Activated naive CD4-positive, alpha-beta T cell treated with anti-CD3 and anti-CD28 coated beads for 36 hours (primary cell): ENCODE measurements at regions of chr1 and their contacts with region 1.

Region 1: GRCh38 chr1:85276215-85276977 is at the start of gene BCL10:
- DNase-seq: peak; percentile 97
- H3K4me3 Mint-ChIP-seq: peak within 1 kb of the TSS; percentile 80
- H3K27ac Mint-ChIP-seq: peak within 1 kb of the TSS; percentile 87
- H3K4me1 Mint-ChIP-seq: peaks cover 46% of the 10 kb centered on the region
- H3K27me3 Mint-ChIP-seq: no peaks in the 10 kb centered on the region
- total RNA-seq, gene BCL10: 13.8 to 17.7 TPM

Region 2: GRCh38 chr1:84156210-84156621 is 1120.2 kb before region 1 on chr1:
- CTCF ChIA-PET with region 1: no interaction called
- intact Hi-C with region 1: loop called (anchors 5 kb)
- DNase-seq: peak; percentile 19
- H3K4me3 Mint-ChIP-seq: peak overlapping the region; percentile 18
- H3K27ac Mint-ChIP-seq: peak overlapping the region; percentile 64
- H3K4me1 Mint-ChIP-seq: peaks cover 83% of the 10 kb centered on the region
- H3K27me3 Mint-ChIP-seq: no peaks in the 10 kb centered on the region

Region 3: GRCh38 chr1:84573967-84574842 is 702.2 kb before region 1 on chr1 and contains the start of gene CTBS:
- CTCF ChIA-PET with region 1: no interaction called
- intact Hi-C with region 1: loop called (anchors 5 kb)
- DNase-seq: peak; percentile 86
- H3K4me3 Mint-ChIP-seq: peak within 1 kb of the TSS; percentile 95
- H3K27ac Mint-ChIP-seq: peak within 1 kb of the TSS; percentile 98
- H3K4me1 Mint-ChIP-seq: peaks cover 28% of the 10 kb centered on the region
- H3K27me3 Mint-ChIP-seq: no peaks in the 10 kb centered on the region
- total RNA-seq, gene CTBS: 21.1 to 21.2 TPM

Region 4: DNA sequence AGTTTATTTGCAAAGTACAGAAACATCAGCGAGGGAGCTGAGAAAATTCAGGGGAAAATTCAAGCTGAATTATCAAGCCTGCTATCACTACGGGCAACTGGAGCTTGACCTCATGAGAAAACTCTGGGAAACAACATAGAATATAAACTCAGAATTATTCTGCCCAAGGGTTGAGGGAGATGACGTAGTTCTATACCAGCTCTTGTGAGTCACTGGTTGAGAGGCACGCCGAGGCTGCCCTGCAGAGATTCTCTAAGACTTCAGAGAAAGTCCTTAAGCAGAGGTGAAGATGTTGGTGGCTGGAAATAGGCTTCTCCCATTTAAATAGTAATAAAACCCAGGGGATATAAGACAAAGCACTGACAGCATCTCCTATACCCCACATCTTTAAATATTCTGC is 87.9 kb before region 1 on chr1:
- CTCF ChIA-PET with region 1: no interaction called
- intact Hi-C with region 1: no loop called
- DNase-seq: no peak
- H3K4me3 Mint-ChIP-seq: no peak overlapping the region
- H3K27ac Mint-ChIP-seq: no peak overlapping the region
- H3K4me1 Mint-ChIP-seq: peaks cover 2% of the 10 kb centered on the region
- H3K27me3 Mint-ChIP-seq: no peaks in the 10 kb centered on the region

Region 5: GRCh38 chr1:85259118-85259911 is 17.1 kb before region 1 on chr1 and contains the start of gene C1orf52:
- CTCF ChIA-PET with region 1: interaction called, 29 read pairs
- intact Hi-C with region 1: loop called (anchors 1 kb)
- DNase-seq: peak; percentile 97
- H3K4me3 Mint-ChIP-seq: peak within 1 kb of the TSS; percentile 96
- H3K27ac Mint-ChIP-seq: peak within 1 kb of the TSS; percentile 89
- H3K4me1 Mint-ChIP-seq: peaks cover 38% of the 10 kb centered on the region
- H3K27me3 Mint-ChIP-seq: no peaks in the 10 kb centered on the region
- total RNA-seq, gene C1orf52: 28.3 to 29.5 TPM

Region 6: GRCh38 chr1:85351202-85351828 is 74.9 kb after region 1 on chr1:
- CTCF ChIA-PET with region 1: no interaction called
- intact Hi-C with region 1: no loop called
- DNase-seq: no peak
- H3K4me3 Mint-ChIP-seq: no peak overlapping the region
- H3K27ac Mint-ChIP-seq: no peak overlapping the region
- H3K4me1 Mint-ChIP-seq: no peaks in the 10 kb centered on the region
- H3K27me3 Mint-ChIP-seq: peaks cover 5% of the 10 kb centered on the region

Region 7: DNA sequence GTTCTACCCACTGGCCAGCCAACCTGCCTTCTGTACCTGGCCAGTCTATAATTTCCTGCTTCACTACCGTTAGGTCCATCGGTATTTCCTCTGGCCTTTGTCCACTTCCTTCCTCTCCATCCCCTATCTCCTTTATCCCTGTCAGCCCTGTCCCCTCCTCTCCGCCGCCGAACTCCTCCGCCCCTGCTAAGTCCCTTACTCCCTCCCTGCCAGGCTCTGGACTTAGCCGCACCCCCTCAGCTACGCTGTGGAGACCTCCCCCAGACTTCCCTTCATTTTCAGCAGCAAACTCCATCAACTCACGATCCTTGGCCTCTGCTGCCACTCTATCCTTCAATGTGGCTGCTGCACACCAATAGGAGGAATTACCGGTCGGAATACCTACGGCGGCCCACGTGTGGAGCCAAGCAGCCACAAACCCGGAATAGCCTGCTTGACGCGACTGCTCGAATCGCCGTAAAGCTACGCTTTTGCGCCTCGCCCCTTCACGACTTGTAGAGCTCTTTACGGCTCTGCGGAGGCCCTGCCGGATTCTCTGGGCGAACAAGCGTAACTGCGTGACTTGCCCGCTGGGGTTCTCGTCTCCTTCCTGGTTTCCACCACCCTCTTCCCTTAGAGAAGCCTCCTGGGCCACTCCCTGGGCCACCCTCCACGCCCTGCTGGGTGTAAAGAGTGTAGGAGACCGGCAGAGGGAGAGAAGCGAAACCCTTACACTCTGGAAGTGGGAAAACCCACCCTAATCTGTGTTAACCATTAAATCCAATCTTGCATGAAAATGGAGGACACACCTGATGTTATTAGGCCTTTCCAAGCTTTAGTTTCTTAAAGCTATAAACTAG is 431.8 kb after region 1 on chr1 and contains the start of gene ZNHIT6:
- CTCF ChIA-PET with region 1: no interaction called
- intact Hi-C with region 1: loop called (anchors 2 kb)
- DNase-seq: peak; percentile 93
- H3K4me3 Mint-ChIP-seq: no peak within 1 kb of the TSS
- H3K27ac Mint-ChIP-seq: no peak within 1 kb of the TSS
- H3K4me1 Mint-ChIP-seq: peaks cover 21% of the 10 kb centered on the region
- H3K27me3 Mint-ChIP-seq: no peaks in the 10 kb centered on the region
- total RNA-seq, gene ZNHIT6: 19.8 to 19.9 TPM

Region 8: GRCh38 chr1:86913896-86914634 is 1637.7 kb after region 1 on chr1 and contains the start of gene SELENOF:
- CTCF ChIA-PET with region 1: no interaction called
- intact Hi-C with region 1: loop called (anchors 1 kb)
- DNase-seq: peak; percentile 100
- H3K4me3 Mint-ChIP-seq: no peak within 1 kb of the TSS
- H3K27ac Mint-ChIP-seq: peak within 1 kb of the TSS; percentile 53
- H3K4me1 Mint-ChIP-seq: peaks cover 47% of the 10 kb centered on the region
- H3K27me3 Mint-ChIP-seq: no peaks in the 10 kb centered on the region
- total RNA-seq, gene SELENOF: 111 to 115 TPM